AG04449 (cell line): ENCODE measurements at regions of chr11 and their contacts with region 1.

Region 1: DNA sequence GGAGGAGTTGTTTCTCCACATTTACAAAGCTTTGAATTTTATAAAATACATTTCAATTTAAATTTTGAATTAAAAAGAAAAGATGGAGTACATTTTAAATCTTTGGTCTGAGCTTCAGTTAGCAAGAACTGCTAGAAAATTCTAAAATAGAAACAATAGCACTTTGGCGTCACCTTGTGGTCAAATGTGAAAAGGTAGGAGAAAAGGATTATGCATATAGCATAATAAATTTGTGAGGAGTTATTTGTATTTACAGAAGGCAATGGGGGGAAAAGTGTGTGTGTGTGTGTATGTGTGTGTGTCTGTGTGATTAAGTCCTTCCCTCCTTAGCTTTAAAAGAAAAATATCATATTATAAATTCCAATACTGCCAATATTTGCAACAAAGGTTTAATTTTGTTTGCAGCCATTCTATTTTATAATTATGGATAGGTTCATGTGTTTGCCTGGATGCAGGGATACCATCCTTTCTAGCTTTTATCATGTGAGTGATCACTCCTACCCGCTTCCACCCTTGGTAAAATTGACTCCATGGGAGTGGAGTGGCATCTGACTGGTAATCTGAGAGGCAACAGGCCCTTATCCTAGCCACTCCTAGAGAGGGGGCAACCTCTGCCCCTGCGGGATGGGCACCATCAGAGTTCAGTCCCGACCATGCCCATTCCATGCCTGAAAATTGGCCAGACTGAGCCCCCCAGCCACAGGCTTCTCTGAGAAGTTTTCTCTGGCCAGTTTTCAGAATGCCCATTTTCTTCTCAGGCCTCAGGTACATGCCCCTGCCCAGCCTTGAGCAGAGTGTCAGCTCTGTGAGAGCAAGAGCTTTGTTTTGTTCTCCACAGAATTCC is 13.6 kb upstream of the LGR4 start:
- DNase-seq: no peak
- H3K4me3 ChIP-seq: no peak overlapping the region
- CTCF ChIP-seq: peak; percentile 60

Region 2: DNA sequence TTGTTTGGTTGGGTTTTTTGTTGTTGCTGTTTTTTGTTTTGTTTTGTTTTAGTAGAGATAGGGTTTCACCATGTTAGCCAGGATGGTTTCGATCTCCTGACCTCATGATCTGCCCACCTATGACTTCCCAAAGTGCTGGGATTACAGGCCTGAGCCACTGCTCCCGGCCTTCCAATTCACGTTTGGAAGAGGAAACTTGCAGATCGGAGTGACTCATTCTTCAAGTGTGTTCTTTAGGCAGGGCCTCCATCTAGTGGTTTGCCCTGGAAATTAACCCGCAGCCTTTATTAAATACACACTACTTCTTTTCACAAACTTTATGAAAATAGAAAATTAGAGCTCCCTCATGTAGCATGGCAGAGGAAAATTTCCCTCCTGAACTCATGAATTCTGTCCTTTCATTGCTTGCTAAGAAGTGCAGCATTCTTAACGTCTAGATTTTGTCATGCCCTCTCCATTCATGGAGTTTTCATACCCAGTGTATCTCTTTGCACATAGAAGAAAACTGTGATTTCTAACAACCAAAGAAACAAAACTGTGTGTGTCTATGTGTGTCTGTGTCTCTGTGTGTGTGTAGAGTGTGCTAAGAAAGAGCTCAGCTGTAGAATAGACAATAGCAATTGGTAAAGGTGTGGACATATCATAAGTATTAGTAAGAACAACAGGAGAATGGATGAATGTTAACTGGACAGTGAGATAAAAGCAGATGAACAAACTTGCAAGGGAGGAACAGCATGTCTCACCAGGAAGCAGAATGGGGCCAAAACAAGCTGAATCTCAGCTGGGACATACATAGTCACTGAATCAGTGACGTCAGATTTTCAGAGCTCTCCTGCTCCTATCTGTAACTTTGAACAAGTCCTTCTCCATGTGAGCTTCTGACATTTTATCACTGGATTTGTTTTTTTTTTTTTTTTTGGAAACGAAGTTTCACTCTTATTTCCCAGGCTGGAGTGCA is 327.2 kb before region 1 on chr11:
- CTCF ChIA-PET with region 1: interaction called, 38 read pairs
- POLR2A ChIA-PET with region 1: no interaction called
- DNase-seq: peak; percentile 46
- H3K4me3 ChIP-seq: no peak overlapping the region
- CTCF ChIP-seq: peak; percentile 64

Region 3: GRCh38 chr11:27196203-27196897 is 289.8 kb before region 1 on chr11:
- CTCF ChIA-PET with region 1: interaction called, 35 read pairs
- POLR2A ChIA-PET with region 1: no interaction called
- DNase-seq: peak; percentile 67
- H3K4me3 ChIP-seq: no peak overlapping the region
- CTCF ChIP-seq: no peak

Region 4: DNA sequence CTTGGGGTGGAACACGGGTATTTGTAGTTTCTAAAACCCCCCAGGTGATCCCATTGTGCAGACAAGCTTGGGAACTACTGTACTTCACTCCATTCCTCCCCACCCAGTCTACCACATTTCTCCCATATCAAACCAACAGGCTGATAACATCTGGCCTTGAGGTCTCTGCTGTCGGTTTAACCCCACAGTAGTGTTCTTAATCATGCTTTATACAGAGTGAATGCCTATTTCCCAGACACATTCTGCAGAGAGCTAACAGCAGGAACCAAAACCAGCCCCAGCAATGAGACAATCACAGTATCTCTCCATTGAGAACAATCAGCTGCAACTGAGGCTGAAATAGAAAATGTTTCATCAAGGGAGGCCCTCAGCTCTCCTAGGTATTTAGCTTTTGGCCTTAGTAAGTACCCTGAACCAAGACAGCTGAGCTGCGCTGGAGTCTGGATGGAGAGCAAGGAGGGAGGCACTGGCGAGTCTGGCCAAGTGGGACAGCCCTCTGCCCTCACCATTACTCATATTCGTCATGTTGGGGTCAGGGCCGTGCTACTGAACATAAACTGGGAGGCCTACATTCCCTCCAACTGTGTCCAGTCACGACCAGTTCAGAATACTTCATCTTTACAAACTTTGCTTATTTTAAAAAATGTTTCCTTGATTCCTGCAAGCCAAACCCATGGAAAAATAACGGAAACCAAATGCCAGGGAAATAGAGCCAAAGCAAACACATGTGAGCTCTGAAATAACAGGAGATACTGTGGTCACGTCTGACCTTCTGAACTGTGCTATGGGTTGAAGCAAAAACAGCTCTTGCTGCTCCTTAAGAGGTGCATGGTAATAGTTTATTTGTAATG is 204.2 kb before region 1 on chr11:
- CTCF ChIA-PET with region 1: interaction called, 10 read pairs
- POLR2A ChIA-PET with region 1: no interaction called
- DNase-seq: peak; percentile 93
- H3K4me3 ChIP-seq: no peak overlapping the region
- CTCF ChIP-seq: no peak

Region 5: DNA sequence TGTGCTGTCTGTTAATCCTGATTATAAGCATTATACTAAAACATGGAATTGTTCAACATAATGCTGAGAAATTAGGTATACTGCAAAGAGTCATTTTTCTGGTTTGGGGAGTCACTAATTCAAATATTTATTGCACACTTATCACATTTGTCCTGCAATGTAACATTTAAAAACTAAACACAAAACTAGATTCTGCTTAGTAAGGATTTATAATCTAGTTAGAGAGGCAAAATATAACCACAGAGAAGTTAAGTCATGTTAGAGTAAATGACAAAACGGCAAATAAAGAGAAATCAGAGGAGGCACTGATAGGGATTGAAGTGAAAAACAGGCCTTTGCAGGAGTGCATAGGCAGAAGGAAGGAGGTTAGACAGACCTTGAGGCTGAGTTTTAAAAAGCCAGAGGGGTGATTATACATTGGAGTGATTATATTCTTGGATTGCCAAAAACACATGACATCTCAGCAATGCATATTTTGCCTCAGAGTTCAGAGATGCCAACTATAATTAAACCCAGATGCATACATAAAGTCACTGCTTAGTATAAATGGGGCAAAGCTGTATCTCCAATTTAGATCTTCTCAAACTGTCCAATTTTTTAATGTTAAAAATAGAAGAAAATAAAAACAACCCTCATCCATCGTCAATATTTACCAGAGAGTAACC is 172.9 kb before region 1 on chr11:
- CTCF ChIA-PET with region 1: interaction called, 18 read pairs
- POLR2A ChIA-PET with region 1: no interaction called
- DNase-seq: no peak
- H3K4me3 ChIP-seq: no peak overlapping the region
- CTCF ChIP-seq: no peak

Region 6: GRCh38 chr11:27497284-27497866 is 11.2 kb after region 1 on chr11:
- CTCF ChIA-PET with region 1: interaction called, 108 read pairs
- POLR2A ChIA-PET with region 1: interaction called, 3 read pairs
- DNase-seq: no peak
- H3K4me3 ChIP-seq: no peak overlapping the region
- CTCF ChIP-seq: no peak